ENCODE measurements at regions of chr7 and their contacts with region 1.

Region 1: DNA sequence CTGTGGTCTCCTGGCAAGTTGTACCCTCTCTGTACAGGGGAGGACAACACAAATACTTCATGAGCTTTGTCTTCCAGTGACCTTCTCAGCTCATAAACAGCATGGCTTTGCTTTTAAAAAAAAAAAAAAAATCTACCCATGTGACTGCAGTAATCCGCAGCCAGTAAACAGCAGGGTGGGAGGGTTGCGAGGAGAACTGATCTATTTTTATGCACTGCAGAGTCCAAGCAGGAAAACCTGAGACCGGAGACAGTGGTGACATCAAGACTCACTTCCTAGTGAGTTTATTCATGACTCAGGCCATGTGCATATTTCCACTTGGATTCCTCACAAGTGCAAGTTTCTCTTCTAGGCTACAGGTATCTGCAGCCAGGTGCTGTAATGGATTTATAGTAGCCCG is 127.9 kb downstream of the NRF1 start:
- DNase-seq: no peak
- H3K4me3 ChIP-seq: no peak overlapping the region
- CTCF ChIP-seq: no peak
- POLR2A ChIP-seq: no peak

Region 2: DNA sequence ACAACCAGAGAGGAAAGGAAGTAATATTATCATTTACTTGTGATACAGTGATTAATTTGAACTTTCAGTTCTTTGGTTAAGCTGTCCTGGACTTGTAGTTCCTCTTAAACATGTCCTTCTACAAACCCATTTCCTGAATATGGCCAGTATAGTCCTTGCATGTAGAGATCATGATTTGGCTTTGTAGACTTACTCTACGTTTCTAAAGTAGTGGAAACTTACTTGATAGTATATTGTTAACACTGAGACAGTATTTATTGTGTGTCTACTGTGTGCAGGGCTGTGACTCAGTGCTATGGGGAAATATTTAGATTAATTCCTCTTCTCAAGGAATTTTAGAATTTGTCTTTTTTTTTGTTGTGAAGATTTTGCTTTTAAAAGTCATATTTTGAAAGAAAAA is 18.4 kb before region 1 on chr7:
- intact Hi-C with region 1: loop called (anchors 1 kb)
- DNase-seq: no peak
- H3K4me3 ChIP-seq: no peak overlapping the region
- CTCF ChIP-seq: no peak
- POLR2A ChIP-seq: no peak

Measured in lower leg skin (tissue), 4 donors.